ENCODE measurements at regions of chr13 and their contacts with region 1.

Region 1: GRCh38 chr13:99312493-99312883 is 5.3 kb upstream of the GPR183 start:
- DNase-seq: no peak
- H3K4me3 ChIP-seq: no peak overlapping the region
- CTCF ChIP-seq: no peak

Region 2: GRCh38 chr13:99275093-99275469 is 37.4 kb before region 1 on chr13:
- in situ Hi-C with region 1: loop called (anchors 5 kb)
- DNase-seq: peak; percentile 92
- H3K4me3 ChIP-seq: no peak overlapping the region
- CTCF ChIP-seq: no peak

Region 3: DNA sequence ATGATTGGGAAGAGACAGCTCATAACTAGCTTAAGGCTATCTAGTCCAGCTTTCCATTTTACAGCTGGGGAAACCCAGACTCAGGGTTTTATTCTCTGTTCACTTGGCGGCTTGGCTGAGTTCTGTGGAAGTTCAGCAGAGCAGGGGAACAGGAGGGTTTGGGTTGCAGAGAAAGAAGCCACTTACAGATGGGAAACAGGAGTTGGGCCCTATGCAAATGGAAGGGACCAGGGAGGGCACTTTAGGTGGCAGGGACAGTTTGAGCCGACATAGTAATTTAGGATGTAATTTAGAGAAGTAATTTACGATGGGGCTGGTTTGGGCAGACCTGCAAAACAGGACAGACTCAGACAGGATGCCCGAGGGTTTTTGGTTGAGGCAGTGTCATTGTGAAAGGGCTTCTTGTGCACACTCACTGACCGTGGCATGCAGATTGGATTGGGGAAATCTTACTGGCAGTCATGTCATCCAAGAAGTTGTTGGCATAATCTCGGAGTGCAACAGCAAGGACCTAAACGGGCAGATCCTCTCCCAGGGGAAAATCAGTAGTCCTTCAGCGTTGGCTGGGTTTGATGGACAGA is 42.0 kb after region 1 on chr13:
- in situ Hi-C with region 1: loop called (anchors 5 kb)
- DNase-seq: no peak
- H3K4me3 ChIP-seq: no peak overlapping the region
- CTCF ChIP-seq: no peak

Measured in astrocyte of the cerebellum (primary cell).